ENCODE measurements at regions of chrX and their contacts with region 1.

Region 1: DNA sequence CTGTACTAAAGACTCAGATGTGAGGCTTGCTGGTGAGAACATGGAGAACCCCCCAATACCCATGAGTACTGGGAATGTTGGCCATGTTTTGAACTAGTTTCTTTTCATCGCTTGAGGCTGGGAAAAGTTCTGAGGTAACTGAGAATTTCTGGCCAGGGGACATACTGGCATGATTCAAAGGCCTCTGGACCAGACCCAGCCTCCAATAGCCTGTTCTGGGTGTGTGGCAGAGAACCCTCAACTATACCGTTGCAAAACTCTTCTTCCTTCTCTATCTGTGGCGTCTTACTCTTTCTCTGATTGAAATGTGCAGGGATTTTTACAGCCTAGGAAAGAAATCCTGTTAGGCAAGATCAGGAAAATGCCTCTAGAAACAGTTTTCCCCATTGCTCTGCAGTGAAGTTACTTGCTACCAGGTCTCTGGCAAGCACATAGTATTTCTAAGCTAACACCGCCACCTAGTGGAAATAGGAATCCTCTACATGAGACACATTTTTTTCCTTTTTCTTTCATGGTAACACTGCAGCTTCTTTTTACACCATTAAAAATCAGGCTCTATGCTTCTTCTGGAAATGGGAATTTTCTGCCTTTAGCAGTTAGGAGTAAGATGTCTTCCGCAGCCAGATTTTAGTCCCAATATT is 170.7 kb upstream of the ZCCHC13 start:
- DNase-seq: no peak
- ATAC-seq: peak; percentile 73 to 93 (median 88)
- H3K4me3 ChIP-seq: no peak overlapping the region
- H3K27ac ChIP-seq: no peak overlapping the region
- H3K4me1 ChIP-seq: no peaks in the 10 kb centered on the region
- H3K27me3 ChIP-seq: peaks cover 0 to 4% of the 10 kb centered on the region in 2 donors
- CTCF ChIP-seq: peak; percentile 73 to 83 (median 79)
- POLR2A ChIP-seq: no peak

Region 2: GRCh38 chrX:73855546-73855945 is 277.7 kb before region 1 on chrX:
- intact Hi-C with region 1: loop called (anchors 10 kb)
- DNase-seq: peak; percentile 41 to 63 (median 54)
- ATAC-seq: peak; percentile 52 to 85 (median 54)
- H3K4me3 ChIP-seq: no peak overlapping the region
- H3K27ac ChIP-seq: no peak overlapping the region
- H3K4me1 ChIP-seq: no peaks in the 10 kb centered on the region
- H3K27me3 ChIP-seq: no peaks in the 10 kb centered on the region
- CTCF ChIP-seq: peak; percentile 80 to 89 (median 83)
- POLR2A ChIP-seq: no peak

Measured in right lobe of liver (tissue), 6 donors.